RWPE1 (cell line): ENCODE measurements at regions of chr17 and their contacts with region 1.

Region 1: GRCh38 chr17:60652454-60653247 is 25.0 kb upstream of the BCAS3 start:
- DNase-seq: no peak
- H3K27ac ChIP-seq: no peak overlapping the region
- CTCF ChIP-seq: no peak

Region 2: DNA sequence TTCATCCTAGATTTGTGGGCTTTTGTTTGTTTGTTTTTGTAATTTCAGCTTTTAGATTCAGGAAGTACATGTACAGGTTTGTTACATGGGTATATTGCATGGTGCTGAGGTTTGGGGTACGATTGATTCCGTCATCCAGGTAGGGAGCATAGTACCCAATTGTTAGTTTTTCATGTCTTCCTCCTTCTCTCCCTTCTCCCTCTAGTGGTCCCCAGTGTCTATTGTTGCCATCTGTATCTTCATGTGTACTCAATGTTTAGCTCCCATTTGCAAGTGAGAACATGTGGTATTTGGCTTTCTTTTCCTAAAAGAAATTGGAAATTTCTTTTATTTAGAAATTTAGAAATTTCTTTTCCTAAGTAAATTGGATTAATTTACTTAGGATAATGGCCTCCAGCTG is 12.1 kb before region 1 on chr17:
- CTCF ChIA-PET with region 1: interaction called, 10 read pairs
- POLR2A ChIA-PET with region 1: no interaction called
- DNase-seq: no peak
- H3K27ac ChIP-seq: no peak overlapping the region
- CTCF ChIP-seq: peak; percentile 28